Body of pancreas (tissue), 4 donors: ENCODE measurements at regions of chr1 and their contacts with region 1.

Region 1: DNA sequence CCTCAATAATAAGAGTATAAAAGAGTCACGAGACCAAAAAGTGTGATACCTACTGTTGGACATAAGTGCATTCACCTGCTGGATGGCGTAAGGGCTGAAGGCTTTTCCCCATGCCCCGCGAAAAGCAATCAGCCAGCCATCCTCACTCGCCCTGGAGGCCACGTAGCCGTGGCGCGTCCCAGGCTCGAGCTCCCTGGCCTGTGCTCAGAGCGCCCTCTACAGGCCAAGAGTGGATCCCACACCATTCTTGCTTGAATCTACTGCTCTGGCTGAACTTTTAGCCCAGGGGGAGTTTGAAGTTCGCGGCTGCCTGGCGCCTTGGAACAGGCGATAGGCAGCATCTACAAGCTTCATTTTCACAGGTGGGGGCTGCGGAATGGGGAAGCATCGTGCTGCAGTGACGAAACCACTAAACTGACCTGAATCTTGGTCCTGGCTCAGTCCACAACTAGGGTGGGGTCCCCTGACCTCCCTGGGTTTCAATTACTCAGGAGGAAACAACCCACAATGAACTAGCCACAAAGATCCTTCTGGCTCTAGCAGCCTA is 70.3 kb upstream of the SERBP1 start:
- DNase-seq: peak; percentile 87 to 92 (median 88)
- ATAC-seq: peak; percentile 99
- H3K4me3 ChIP-seq: no peak overlapping the region
- H3K27ac ChIP-seq: no peak overlapping the region
- H3K4me1 ChIP-seq: no peaks in the 10 kb centered on the region
- H3K27me3 ChIP-seq: no peaks in the 10 kb centered on the region
- CTCF ChIP-seq: peak; percentile 94 to 99 (median 96)
- POLR2A ChIP-seq: no peak

Region 2: DNA sequence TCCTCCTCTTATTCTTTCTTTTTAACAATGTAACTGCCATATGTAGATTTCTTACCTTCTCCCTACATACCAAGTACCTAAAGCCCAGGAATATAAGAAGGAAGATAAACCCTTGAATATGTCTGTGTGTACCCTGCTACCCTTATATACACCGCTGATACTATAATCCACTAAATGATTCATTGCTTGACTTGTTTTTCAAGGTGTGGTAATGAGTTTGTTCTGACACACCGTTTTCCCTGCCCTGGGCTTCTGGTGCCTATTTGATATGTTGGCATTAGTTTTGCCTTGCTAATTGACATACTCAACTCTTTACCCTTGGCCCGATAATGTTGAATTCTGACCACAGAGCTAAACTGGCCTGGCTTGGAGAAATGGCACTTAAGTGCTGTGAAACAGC is 269.9 kb before region 1 on chr1:
- intact Hi-C with region 1: loop called (anchors 5 kb)
- DNase-seq: no peak
- ATAC-seq: no peak
- H3K4me3 ChIP-seq: no peak overlapping the region
- H3K27ac ChIP-seq: no peak overlapping the region
- H3K4me1 ChIP-seq: no peaks in the 10 kb centered on the region
- H3K27me3 ChIP-seq: no peaks in the 10 kb centered on the region
- CTCF ChIP-seq: no peak
- POLR2A ChIP-seq: no peak

Region 3: GRCh38 chr1:67350783-67351182 is 149.7 kb before region 1 on chr1:
- intact Hi-C with region 1: loop called (anchors 5 kb)
- DNase-seq: no peak
- ATAC-seq: no peak
- H3K4me3 ChIP-seq: no peak overlapping the region
- H3K27ac ChIP-seq: no peak overlapping the region
- H3K4me1 ChIP-seq: no peaks in the 10 kb centered on the region
- H3K27me3 ChIP-seq: no peaks in the 10 kb centered on the region
- CTCF ChIP-seq: no peak
- POLR2A ChIP-seq: no peak

Region 4: GRCh38 chr1:67544921-67545320 is 44.4 kb after region 1 on chr1:
- intact Hi-C with region 1: no loop called
- DNase-seq: no peak
- ATAC-seq: no peak
- H3K4me3 ChIP-seq: no peak overlapping the region
- H3K27ac ChIP-seq: no peak overlapping the region
- H3K4me1 ChIP-seq: peaks cover 11% of the 10 kb centered on the region
- H3K27me3 ChIP-seq: no peaks in the 10 kb centered on the region
- CTCF ChIP-seq: no peak
- POLR2A ChIP-seq: no peak